ENCODE measurements at regions of chrX and their contacts with region 1.

Region 1: DNA sequence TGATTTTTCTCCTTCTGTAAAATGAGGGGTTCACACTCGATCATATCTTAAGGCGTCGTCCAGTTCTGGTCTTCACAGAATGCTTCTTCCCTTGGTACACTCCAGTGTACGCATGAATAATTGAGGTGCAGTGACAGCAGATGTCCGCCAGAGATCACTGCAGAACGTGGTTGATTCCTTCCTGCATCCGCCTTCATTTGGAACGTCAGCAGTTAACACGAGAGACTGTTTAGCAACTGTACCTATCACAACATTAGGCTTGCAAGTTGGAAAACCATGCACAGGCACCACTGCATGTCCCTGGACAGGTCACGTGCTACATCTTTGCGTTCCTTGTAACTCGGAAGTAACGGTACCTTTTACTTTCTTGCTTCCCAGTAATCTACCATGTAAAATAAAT is 66.0 kb upstream of the GEMIN8 start:
- DNase-seq: peak; percentile 1 to 67 (median 14)
- ATAC-seq: peak; percentile 68
- H3K4me3 ChIP-seq: no peak overlapping the region
- H3K4me3 Mint-ChIP-seq: peak overlapping the region; percentile 15
- H3K27ac ChIP-seq: no peak overlapping the region
- H3K27ac Mint-ChIP-seq: no peak overlapping the region
- H3K4me1 ChIP-seq: peaks cover 3% of the 10 kb centered on the region
- H3K4me1 Mint-ChIP-seq: peaks cover 9% of the 10 kb centered on the region
- H3K27me3 ChIP-seq: peaks cover 0 to 4% of the 10 kb centered on the region in 2 experiments
- H3K27me3 Mint-ChIP-seq: no peaks in the 10 kb centered on the region
- CTCF ChIP-seq: peak; percentile 34

Region 2: GRCh38 chrX:15127014-15127413 is 1031.3 kb after region 1 on chrX:
- CTCF ChIA-PET with region 1: no interaction called
- POLR2A ChIA-PET with region 1: no interaction called
- intact Hi-C with region 1: loop called in 1 of 2 experiments (anchors 5 kb)
- DNase-seq: no peak
- ATAC-seq: no peak
- H3K4me3 ChIP-seq: no peak overlapping the region
- H3K4me3 Mint-ChIP-seq: no peak overlapping the region
- H3K27ac ChIP-seq: no peak overlapping the region
- H3K27ac Mint-ChIP-seq: no peak overlapping the region
- H3K4me1 ChIP-seq: no peaks in the 10 kb centered on the region
- H3K4me1 Mint-ChIP-seq: no peaks in the 10 kb centered on the region
- H3K27me3 ChIP-seq: no peaks in the 10 kb centered on the region
- H3K27me3 Mint-ChIP-seq: peaks cover 5% of the 10 kb centered on the region
- CTCF ChIP-seq: no peak

Region 3: GRCh38 chrX:15143050-15143824 is 1047.5 kb after region 1 on chrX:
- CTCF ChIA-PET with region 1: interaction called, 4 read pairs
- POLR2A ChIA-PET with region 1: no interaction called
- intact Hi-C with region 1: loop called in 1 of 2 experiments (anchors 5 kb)
- DNase-seq: peak; percentile 16 to 74 (median 49)
- ATAC-seq: peak; percentile 68
- H3K4me3 ChIP-seq: no peak overlapping the region
- H3K4me3 Mint-ChIP-seq: no peak overlapping the region
- H3K27ac ChIP-seq: no peak overlapping the region
- H3K27ac Mint-ChIP-seq: no peak overlapping the region
- H3K4me1 ChIP-seq: peaks cover 6% of the 10 kb centered on the region
- H3K4me1 Mint-ChIP-seq: peaks cover 17% of the 10 kb centered on the region
- H3K27me3 ChIP-seq: no peaks in the 10 kb centered on the region
- H3K27me3 Mint-ChIP-seq: no peaks in the 10 kb centered on the region
- CTCF ChIP-seq: peak; percentile 69